ENCODE measurements at regions of chr17 and their contacts with region 1.

Region 1: DNA sequence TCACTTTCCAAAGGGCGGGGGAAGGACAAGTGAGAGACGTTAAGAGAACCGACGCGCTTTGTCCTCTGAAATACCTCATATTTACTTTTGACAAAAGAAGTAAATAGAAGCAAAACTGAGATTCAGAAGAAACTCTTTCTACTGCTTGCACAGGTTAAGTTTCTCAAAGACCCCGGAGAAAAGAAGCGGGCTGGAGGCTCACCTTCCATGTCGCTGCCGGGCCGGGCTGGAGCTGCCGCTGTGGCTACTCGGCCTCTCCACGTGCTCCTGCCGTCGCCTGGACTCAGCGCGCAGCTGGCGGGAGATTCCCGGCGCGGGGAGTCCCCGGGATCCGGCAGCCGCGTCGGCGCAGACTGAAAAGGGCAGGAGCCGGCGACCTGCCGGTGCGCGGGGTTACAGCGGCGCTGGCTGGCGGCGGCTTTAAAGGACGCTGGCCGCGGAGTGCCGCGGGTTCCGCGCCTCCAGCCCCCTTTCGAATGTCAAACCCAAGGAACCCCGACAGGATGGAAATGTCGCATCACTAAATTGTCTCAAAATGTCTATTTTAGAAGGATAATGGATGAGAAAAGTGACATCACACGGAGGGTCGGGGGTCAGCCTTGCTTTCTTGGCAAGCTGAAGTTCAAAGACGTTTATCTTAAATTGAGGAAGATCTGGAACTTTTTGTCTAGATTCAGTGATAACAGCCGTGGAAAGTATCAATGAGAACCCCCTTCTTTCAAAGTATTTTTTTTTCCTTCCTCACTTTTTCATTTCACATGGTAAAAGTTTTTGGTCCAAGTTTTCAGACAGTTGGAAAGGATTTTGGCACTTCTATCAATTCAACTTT is at the start of gene IKZF3:
- DNase-seq: peak; percentile 95
- H3K4me3 Mint-ChIP-seq: peak within 1 kb of the TSS; percentile 90
- H3K27ac Mint-ChIP-seq: peak within 1 kb of the TSS; percentile 87
- H3K4me1 Mint-ChIP-seq: peaks cover 51% of the 10 kb centered on the region
- H3K27me3 Mint-ChIP-seq: peaks cover 4% of the 10 kb centered on the region
- total RNA-seq, gene IKZF3: 14.7 and 15.9 TPM in 2 replicates

Region 2: DNA sequence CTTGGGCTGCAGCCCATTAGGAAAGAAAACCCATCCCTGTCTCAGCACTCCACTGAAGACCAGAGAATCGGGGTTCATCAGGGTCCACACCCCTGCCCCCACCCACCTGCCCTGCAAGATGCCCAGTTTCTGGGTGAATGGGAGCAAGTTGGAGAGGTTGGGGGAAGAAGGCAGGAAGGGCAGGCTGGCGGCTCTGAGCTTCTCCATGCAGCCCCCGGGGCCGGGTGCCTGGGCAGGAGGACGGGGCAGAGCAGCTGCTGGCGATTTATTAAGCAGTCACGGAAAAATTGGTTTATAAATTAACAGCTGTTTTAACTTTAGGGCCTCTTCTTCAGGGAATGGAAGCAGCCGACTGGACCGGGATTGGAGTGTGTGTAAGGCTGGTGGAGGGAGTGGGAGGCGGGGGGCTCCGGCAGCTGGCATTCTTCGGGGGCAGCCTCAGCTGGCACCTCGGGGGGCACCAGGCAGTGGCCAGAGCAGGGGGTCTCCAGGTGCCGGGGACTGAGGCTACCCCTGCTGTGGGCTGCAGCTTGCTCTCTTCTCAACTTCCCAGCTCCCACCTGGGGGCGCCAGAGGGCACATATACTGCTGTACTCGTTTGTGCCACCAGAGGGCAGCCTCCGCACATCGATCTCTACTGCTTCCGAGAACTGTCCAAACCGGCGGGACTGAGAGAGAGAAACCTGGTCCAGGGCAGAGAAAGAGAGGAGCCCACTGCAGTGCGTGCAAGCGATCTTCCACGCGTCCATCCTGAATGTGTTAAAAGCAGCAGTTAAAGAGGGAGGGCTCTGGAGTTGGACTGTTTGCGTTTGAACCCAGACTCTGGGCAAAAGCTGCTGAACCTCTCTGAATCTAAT is 242.4 kb before region 1 on chr17:
- intact Hi-C with region 1: loop called (anchors 5 kb)
- DNase-seq: peak; percentile 97
- H3K4me3 Mint-ChIP-seq: peak overlapping the region; percentile 76
- H3K27ac Mint-ChIP-seq: peak overlapping the region; percentile 62
- H3K4me1 Mint-ChIP-seq: peaks cover 17% of the 10 kb centered on the region
- H3K27me3 Mint-ChIP-seq: peaks cover 57% of the 10 kb centered on the region

Region 3: DNA sequence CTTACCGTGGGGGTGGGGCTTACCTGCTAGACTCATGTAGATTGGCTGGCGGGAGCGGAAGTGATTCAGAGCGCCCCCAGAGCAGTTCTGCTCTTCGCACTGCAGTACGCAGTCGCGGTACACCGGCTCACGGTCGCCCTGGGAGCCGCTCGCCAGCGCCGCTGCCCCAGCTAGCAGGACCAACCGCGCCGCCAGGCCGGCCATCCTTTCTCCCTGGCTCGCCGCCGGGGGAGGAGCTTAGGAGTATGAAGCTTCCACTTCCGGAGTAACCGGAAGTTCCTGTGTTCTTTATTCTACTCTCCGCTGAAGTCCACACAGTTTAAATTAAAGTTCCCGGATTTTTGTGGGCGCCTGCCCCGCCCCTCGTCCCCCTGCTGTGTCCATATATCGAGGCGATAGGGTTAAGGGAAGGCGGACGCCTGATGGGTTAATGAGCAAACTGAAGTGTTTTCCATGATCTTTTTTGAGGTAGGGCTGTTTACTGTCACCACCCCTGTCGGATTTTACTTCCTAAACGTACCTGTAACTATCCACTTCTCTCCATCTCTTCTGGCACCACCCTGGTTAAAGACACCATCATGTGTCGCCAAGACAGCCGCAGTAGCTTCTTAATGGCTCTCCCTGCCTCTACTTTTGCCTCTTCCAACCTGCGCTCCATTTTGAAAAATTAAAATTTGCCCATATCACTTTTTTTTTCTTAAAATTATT is 176.2 kb before region 1 on chr17 and contains the start of gene PGAP3:
- intact Hi-C with region 1: loop called (anchors 5 kb)
- DNase-seq: peak; percentile 94
- H3K4me3 Mint-ChIP-seq: peak within 1 kb of the TSS; percentile 95
- H3K27ac Mint-ChIP-seq: peak within 1 kb of the TSS; percentile 92
- H3K4me1 Mint-ChIP-seq: peaks cover 14% of the 10 kb centered on the region
- H3K27me3 Mint-ChIP-seq: no peaks in the 10 kb centered on the region
- total RNA-seq, gene PGAP3: 12.5 and 13.5 TPM in 2 replicates

Region 4: DNA sequence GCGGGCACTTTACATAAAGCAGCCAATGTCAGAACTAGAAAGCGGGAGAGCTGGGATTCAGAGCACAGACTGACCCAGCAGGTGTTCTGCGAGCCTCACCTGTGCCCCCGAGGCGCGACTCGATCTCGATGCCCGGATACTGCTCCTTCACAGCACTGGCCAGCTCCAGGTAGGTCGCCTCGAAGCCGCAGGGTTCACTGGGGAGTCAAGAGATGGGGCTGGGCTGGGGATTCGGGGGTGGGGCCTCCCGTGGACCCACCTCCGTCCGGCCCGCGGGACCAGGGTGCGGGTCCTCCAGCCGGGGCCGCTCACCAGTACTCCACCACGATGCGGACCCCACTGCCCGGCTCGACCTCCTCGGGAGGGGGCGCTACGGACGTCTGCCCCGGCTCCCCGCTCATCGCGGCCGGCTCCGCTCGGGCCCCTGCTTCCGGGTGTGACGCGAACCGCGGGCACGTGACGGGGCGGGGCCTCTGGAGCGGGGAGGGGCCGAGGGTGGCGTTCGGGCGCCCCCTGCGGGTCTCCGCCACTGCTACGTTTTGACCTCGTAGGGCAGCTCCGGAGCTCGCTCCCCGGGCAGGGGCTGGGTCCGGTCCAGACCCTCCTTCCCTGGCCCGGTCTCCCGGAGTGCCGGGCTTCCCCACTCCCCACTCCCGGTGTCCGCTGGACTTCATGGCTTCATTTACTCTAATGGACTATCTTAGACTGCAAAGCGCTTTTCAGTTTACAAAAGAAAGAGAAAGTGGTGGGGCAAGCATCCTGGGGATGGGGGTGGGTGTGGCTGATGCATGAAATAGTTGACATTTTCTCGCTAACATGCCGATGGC is 133.8 kb before region 1 on chr17 and contains the start of gene MIEN1:
- intact Hi-C with region 1: loop called (anchors 1 kb)
- DNase-seq: peak; percentile 99
- H3K4me3 Mint-ChIP-seq: peak within 1 kb of the TSS; percentile 95
- H3K27ac Mint-ChIP-seq: peak within 1 kb of the TSS; percentile 92
- H3K4me1 Mint-ChIP-seq: peaks cover 16% of the 10 kb centered on the region
- H3K27me3 Mint-ChIP-seq: peaks cover 2% of the 10 kb centered on the region
- total RNA-seq, gene MIEN1: 29.8 and 33.4 TPM in 2 replicates

Region 5: DNA sequence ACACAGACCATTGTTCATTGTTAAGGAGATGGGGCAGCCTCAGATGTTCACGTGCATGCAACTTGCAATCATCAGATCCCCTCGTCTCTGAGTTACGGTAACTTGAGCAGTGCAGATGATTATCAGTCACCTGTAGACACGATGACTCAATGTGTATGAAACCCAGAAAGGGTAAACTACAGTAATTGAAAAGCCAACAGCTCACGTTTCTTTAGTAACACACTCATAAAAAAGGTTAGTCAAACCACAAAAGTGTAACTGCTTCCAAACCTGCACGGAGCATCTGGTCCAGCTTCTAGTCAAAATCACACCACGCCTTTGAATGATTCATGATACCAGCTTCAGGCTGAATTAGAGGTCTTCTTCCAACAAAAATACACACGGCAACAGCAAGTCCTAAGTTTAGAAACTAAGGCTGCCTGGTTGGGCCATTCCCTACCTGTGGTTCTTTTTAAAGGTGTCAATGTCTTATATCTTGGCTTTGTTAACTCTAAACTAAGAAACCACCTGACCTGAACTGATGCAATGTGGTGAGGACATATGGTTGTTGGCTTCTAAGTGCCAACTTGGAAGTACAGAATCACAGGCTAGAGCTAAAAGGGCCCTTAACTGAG is 94.1 kb before region 1 on chr17:
- intact Hi-C with region 1: loop called (anchors 1 kb)
- DNase-seq: peak; percentile 86
- H3K4me3 Mint-ChIP-seq: peak overlapping the region; percentile 13
- H3K27ac Mint-ChIP-seq: peak overlapping the region; percentile 74
- H3K4me1 Mint-ChIP-seq: peaks cover 69% of the 10 kb centered on the region
- H3K27me3 Mint-ChIP-seq: no peaks in the 10 kb centered on the region

Region 6: GRCh38 chr17:39794249-39794970 is 69.7 kb before region 1 on chr17:
- intact Hi-C with region 1: loop called (anchors 1 kb)
- DNase-seq: peak; percentile 75
- H3K4me3 Mint-ChIP-seq: peak overlapping the region; percentile 76
- H3K27ac Mint-ChIP-seq: peak overlapping the region; percentile 81
- H3K4me1 Mint-ChIP-seq: peaks cover 55% of the 10 kb centered on the region
- H3K27me3 Mint-ChIP-seq: no peaks in the 10 kb centered on the region

Region 7: DNA sequence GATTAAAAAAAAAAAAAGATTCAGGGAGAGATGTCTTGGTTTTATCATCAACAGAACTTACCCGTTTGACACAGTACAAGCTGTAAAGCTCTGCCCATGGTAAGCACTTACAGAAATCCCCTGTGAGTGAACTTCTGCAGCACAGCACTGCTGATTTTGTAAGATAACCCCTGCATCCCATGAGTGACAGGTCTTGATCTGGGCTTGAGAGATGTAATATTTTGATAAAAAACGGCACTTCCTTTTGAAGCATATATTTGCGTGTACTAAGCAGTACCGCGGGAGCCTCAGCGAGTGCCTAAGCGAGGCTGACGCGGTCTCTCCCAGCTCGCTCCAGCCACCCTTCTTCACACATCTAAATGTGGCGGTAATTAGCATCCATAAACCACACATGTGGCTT is 50.5 kb before region 1 on chr17:
- intact Hi-C with region 1: loop called (anchors 5 kb)
- DNase-seq: peak; percentile 85
- H3K4me3 Mint-ChIP-seq: peak overlapping the region; percentile 76
- H3K27ac Mint-ChIP-seq: peak overlapping the region; percentile 43
- H3K4me1 Mint-ChIP-seq: peaks cover 34% of the 10 kb centered on the region
- H3K27me3 Mint-ChIP-seq: no peaks in the 10 kb centered on the region

Region 8: GRCh38 chr17:39848600-39848999 is 15.5 kb before region 1 on chr17:
- intact Hi-C with region 1: no loop called
- DNase-seq: no peak
- H3K4me3 Mint-ChIP-seq: no peak overlapping the region
- H3K27ac Mint-ChIP-seq: no peak overlapping the region
- H3K4me1 Mint-ChIP-seq: peaks cover 38% of the 10 kb centered on the region
- H3K27me3 Mint-ChIP-seq: no peaks in the 10 kb centered on the region

Region 9: DNA sequence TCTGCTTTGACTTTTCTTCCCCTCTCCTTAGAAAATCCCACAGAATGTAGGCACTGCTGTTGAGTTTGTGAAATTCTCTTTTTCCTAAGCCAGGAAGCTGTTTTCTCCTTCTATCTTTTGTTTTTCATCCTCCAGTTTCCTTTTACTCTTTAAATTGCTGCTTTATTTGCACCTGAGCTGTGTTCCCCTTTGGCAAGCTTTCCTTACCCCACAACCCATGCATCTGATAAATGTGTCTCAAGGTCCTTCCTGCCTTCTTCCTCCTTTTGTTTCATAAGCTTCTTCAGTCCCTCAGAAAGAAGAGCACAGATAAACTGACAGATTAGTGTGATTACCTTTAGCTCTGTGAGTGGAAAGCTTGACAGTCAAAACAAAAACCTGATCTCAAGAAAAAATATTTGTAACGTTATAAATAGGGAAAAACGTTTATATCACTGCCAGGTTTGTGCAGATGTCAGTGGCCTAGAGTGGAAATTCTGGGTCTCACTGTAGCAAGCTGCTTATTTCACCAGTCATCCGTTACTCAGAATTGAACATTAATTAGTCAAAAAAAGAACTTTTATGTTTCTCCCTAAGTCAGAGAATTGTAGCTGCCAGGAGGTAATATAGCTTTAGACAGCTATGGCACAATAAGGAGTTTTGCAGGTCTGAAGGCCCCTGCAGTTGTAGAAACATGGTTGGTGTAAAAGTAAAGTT is 30.7 kb after region 1 on chr17:
- intact Hi-C with region 1: no loop called
- DNase-seq: peak; percentile 44
- H3K4me3 Mint-ChIP-seq: no peak overlapping the region
- H3K27ac Mint-ChIP-seq: peak overlapping the region; percentile 12
- H3K4me1 Mint-ChIP-seq: peaks cover 5% of the 10 kb centered on the region
- H3K27me3 Mint-ChIP-seq: peaks cover 7% of the 10 kb centered on the region